Activated B cell treated with CpG ODN at 0.5 μM for 24 hours (primary cell): ENCODE measurements at regions of chr2 and their contacts with region 1.

Region 1: DNA sequence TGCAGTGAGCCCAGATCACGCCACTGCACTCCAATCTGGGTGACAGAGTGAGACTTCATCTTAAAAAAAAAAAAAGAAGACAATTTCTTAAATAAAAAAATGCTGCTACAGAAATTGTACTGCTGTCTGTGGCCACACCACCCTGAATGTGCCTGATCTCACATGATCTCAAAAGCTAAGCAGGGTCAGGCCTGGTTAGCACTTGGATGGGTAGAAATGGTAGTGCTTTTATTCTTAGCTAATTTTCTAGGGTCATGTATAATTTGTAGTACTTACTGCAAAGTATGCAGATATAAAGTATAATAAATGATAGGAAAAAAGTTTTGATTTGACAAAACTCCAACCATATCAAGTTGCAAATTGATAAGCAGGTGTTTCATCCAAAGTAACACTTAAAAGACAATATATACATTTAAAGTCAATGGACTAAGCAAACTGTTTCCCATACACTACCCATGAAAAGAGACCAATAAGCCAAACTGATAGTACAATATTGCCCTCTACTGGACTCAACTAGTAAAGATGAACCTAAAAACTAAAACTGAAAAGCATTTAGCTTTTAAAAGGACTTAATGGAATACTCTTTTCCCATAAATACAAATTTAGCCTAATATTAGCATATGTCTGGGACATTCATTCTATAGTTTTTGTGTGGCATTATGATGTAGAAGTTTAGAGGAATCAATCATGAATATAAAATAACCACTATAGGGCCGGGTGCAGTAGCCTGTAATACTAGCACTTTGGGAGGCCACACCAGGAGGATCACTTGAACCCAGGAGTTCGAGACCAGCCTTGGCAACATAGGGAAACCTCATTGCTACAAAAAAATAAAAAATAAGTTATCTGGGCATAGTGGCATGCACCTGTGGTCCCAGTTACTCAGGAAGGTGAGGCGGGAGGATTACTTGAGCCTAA is 18.6 kb upstream of the PEX13 start:
- DNase-seq: no peak
- ATAC-seq: peak; percentile 70
- H3K4me3 Mint-ChIP-seq: no peak overlapping the region
- H3K27ac Mint-ChIP-seq: peak overlapping the region; percentile 75
- H3K4me1 Mint-ChIP-seq: peaks cover 42% of the 10 kb centered on the region
- H3K27me3 Mint-ChIP-seq: no peaks in the 10 kb centered on the region
- CTCF ChIP-seq: no peak

Region 2: DNA sequence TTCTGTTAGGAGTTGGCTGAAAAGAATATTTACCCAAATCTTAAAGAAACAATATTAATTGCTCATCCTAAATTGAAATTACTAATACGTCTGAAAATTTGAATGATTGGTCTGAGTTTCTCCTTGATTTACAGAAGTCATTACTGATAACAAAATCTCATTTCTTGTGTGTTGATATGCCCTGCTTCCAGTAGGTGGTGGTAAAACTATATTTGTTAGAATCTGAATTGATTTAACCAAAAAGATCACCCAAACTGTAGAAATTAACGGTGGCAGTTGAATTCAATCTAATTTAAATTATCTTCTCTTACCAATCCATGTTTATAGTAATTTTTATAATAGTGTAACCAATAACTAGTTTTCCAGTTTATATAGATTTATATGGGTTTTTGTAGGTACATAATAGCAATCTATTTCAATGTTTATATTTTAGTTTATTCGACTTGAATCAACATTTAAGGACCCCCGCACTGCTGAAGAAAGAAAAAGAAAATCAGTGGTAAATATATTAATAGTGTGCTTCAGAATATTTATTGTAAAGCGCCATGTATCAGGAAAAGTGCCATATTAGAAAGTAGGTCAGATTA is 204.5 kb before region 1 on chr2:
- CTCF ChIA-PET with region 1: interaction called, 50 read pairs
- POLR2A ChIA-PET with region 1: interaction called, 12 read pairs
- intact Hi-C with region 1: loop called (anchors 1 kb)
- DNase-seq: no peak
- ATAC-seq: peak; percentile 46
- H3K4me3 Mint-ChIP-seq: no peak overlapping the region
- H3K27ac Mint-ChIP-seq: no peak overlapping the region
- H3K4me1 Mint-ChIP-seq: peaks cover 31% of the 10 kb centered on the region
- H3K27me3 Mint-ChIP-seq: no peaks in the 10 kb centered on the region
- CTCF ChIP-seq: peak; percentile 46

Region 3: GRCh38 chr2:60818272-60818671 is 180.6 kb before region 1 on chr2:
- CTCF ChIA-PET with region 1: interaction called, 19 read pairs
- POLR2A ChIA-PET with region 1: interaction called, 3 read pairs
- intact Hi-C with region 1: no loop called
- DNase-seq: no peak
- ATAC-seq: peak; percentile 72
- H3K4me3 Mint-ChIP-seq: peak overlapping the region; percentile 50
- H3K27ac Mint-ChIP-seq: peak overlapping the region; percentile 67
- H3K4me1 Mint-ChIP-seq: peaks cover 50% of the 10 kb centered on the region
- H3K27me3 Mint-ChIP-seq: no peaks in the 10 kb centered on the region
- CTCF ChIP-seq: no peak

Region 4: GRCh38 chr2:60948926-60949579 is 49.8 kb before region 1 on chr2:
- CTCF ChIA-PET with region 1: interaction called, 11 read pairs
- POLR2A ChIA-PET with region 1: interaction called, 7 read pairs
- intact Hi-C with region 1: no loop called
- DNase-seq: no peak
- ATAC-seq: no peak
- H3K4me3 Mint-ChIP-seq: no peak overlapping the region
- H3K27ac Mint-ChIP-seq: no peak overlapping the region
- H3K4me1 Mint-ChIP-seq: peaks cover 7% of the 10 kb centered on the region
- H3K27me3 Mint-ChIP-seq: no peaks in the 10 kb centered on the region
- CTCF ChIP-seq: no peak

Region 5: DNA sequence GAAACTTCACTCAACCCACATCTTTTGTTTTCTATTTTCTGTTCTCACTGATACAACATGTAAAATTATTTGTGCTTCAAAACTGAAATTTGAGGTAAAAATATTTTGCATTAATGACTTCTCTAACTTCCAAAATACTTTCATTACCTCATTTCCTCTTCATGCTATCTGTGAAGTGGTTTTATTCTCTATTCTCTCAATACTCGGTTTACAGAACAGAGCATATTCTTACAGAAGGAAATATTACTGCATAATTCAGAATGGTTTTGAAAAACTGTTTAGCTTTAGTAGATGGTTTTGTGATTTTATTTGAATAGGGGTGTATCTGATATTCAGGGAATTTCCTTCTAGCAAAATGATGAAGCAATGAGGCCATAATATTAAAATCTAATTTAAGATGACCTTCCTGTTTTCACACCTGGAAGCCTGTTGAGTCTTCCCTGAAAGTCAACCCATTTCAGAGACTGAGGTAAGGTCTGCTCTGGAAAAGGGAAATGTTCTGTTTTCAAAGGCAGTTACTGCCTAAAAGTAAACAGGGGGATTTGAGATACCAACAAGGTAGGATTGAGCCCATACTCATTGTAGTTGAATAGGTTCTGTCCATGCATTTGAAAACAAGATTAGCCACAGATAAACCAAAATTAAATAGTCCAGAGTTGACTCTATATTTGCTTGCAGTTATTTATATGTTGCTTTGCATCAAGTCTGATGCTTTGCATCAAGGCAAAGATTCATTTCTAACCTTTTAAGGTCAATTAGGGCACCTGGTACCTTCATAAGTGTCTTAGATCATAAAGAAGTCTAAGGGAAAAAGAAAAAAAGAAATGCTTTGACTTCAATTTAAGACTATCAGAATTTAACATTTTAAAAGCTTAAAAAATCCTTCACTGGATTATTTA is 32.1 kb before region 1 on chr2:
- CTCF ChIA-PET with region 1: interaction called, 11 read pairs
- POLR2A ChIA-PET with region 1: interaction called, 85 read pairs
- intact Hi-C with region 1: loop called (anchors 5 kb)
- DNase-seq: no peak
- ATAC-seq: peak; percentile 41
- H3K4me3 Mint-ChIP-seq: peak overlapping the region; percentile 83
- H3K27ac Mint-ChIP-seq: peak overlapping the region; percentile 87
- H3K4me1 Mint-ChIP-seq: peaks cover 84% of the 10 kb centered on the region
- H3K27me3 Mint-ChIP-seq: no peaks in the 10 kb centered on the region
- CTCF ChIP-seq: no peak

Region 6: GRCh38 chr2:61233581-61233980 is 234.7 kb after region 1 on chr2:
- CTCF ChIA-PET with region 1: no interaction called
- POLR2A ChIA-PET with region 1: no interaction called
- intact Hi-C with region 1: no loop called
- DNase-seq: no peak
- ATAC-seq: no peak
- H3K4me3 Mint-ChIP-seq: no peak overlapping the region
- H3K27ac Mint-ChIP-seq: no peak overlapping the region
- H3K4me1 Mint-ChIP-seq: peaks cover 9% of the 10 kb centered on the region
- H3K27me3 Mint-ChIP-seq: no peaks in the 10 kb centered on the region
- CTCF ChIP-seq: no peak